IMR-90 (cell line): ENCODE measurements at regions of chr6 and their contacts with region 1.

Region 1: GRCh38 chr6:132354512-132355167 is 46.6 kb downstream of the MOXD1 start:
- DNase-seq: no peak
- ATAC-seq: no peak
- H3K4me3 ChIP-seq: no peak overlapping the region
- H3K27ac ChIP-seq: no peak overlapping the region
- H3K4me1 ChIP-seq: no peaks in the 10 kb centered on the region; the same call in 1 of the 2 replicates
- H3K27me3 ChIP-seq: no peaks in the 10 kb centered on the region
- CTCF ChIP-seq: no peak
- POLR2A ChIP-seq: no peak
- RAD21 ChIP-seq: no peak

Region 2: GRCh38 chr6:132320007-132320406 is 34.6 kb before region 1 on chr6:
- CTCF ChIA-PET with region 1: no interaction called
- POLR2A ChIA-PET with region 1: no interaction called
- dilution Hi-C with region 1: no loop called
- in situ Hi-C with region 1: no loop called
- intact Hi-C with region 1: loop called (anchors 5 kb)
- DNase-seq: peak; percentile 83
- ATAC-seq: peak; percentile 37
- H3K4me3 ChIP-seq: no peak overlapping the region
- H3K27ac ChIP-seq: no peak overlapping the region
- H3K4me1 ChIP-seq: peaks cover 2% of the 10 kb centered on the region
- H3K27me3 ChIP-seq: no peaks in the 10 kb centered on the region
- CTCF ChIP-seq: no peak
- POLR2A ChIP-seq: no peak
- RAD21 ChIP-seq: no peak